ENCODE measurements at regions of chr1 and their contacts with region 1.

Region 1: DNA sequence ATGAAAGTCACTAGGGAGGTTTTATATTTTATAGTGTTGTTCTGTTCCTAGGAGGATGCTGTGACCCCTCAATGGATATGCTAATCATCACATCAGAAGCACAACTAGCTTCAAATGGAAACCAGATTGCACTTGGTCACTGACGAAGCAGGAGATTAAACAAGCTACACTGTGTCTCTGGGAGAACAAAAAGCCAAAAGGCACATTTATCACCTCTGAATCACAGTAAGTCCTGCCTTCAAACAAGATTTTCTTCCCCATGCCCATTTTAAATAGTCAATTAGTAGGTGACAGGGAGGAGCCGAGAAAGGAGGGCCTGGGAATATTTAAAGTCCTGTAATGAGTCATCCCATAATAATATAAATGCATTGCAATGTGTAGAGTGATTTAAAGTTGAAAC is 38.1 kb downstream of the RGS2 start:
- DNase-seq: no peak
- ATAC-seq: no peak
- H3K4me3 ChIP-seq: no peak overlapping the region
- H3K4me3 Mint-ChIP-seq: no peak overlapping the region
- H3K27ac ChIP-seq: no peak overlapping the region
- H3K27ac Mint-ChIP-seq: no peak overlapping the region
- H3K4me1 ChIP-seq: no peaks in the 10 kb centered on the region
- H3K4me1 Mint-ChIP-seq: no peaks in the 10 kb centered on the region
- H3K27me3 ChIP-seq: no peaks in the 10 kb centered on the region
- H3K27me3 Mint-ChIP-seq: peaks cover 7 to 16% of the 10 kb centered on the region in 2 donors

Region 2: GRCh38 chr1:192678099-192678498 is 168.9 kb before region 1 on chr1:
- CTCF ChIA-PET with region 1: interaction called in 1 of 2 experiments, 12 read pairs
- POLR2A ChIA-PET with region 1: no interaction called
- DNase-seq: no peak
- ATAC-seq: no peak
- H3K4me3 ChIP-seq: no peak overlapping the region
- H3K4me3 Mint-ChIP-seq: no peak overlapping the region
- H3K27ac ChIP-seq: no peak overlapping the region
- H3K27ac Mint-ChIP-seq: no peak overlapping the region
- H3K4me1 ChIP-seq: no peaks in the 10 kb centered on the region
- H3K4me1 Mint-ChIP-seq: no peaks in the 10 kb centered on the region
- H3K27me3 ChIP-seq: no peaks in the 10 kb centered on the region
- H3K27me3 Mint-ChIP-seq: peaks cover 4 to 5% of the 10 kb centered on the region in 2 donors